Activated CD8-positive, alpha-beta T cell treated with anti-CD3 and anti-CD28 coated beads for 36 hours (primary cell): ENCODE measurements at regions of chr21 and their contacts with region 1.

Region 1: GRCh38 chr21:25561668-25562641 is 45.3 kb downstream of the MRPL39 start:
- DNase-seq: peak; percentile 90
- ATAC-seq: peak; percentile 70
- H3K4me3 Mint-ChIP-seq: peak overlapping the region; percentile 83
- H3K27ac Mint-ChIP-seq: peak overlapping the region; percentile 98
- H3K4me1 Mint-ChIP-seq: peaks cover 42% of the 10 kb centered on the region
- H3K27me3 Mint-ChIP-seq: no peaks in the 10 kb centered on the region
- CTCF ChIP-seq: no peak

Region 2: GRCh38 chr21:25457411-25457810 is 104.5 kb before region 1 on chr21:
- CTCF ChIA-PET with region 1: interaction called, 4 read pairs
- POLR2A ChIA-PET with region 1: interaction called, 117 read pairs
- intact Hi-C with region 1: loop called (anchors 2 kb)
- DNase-seq: no peak
- ATAC-seq: peak; percentile 47
- H3K4me3 Mint-ChIP-seq: peak overlapping the region; percentile 69
- H3K27ac Mint-ChIP-seq: peak overlapping the region; percentile 92
- H3K4me1 Mint-ChIP-seq: peaks cover 83% of the 10 kb centered on the region
- H3K27me3 Mint-ChIP-seq: no peaks in the 10 kb centered on the region
- CTCF ChIP-seq: no peak

Region 3: DNA sequence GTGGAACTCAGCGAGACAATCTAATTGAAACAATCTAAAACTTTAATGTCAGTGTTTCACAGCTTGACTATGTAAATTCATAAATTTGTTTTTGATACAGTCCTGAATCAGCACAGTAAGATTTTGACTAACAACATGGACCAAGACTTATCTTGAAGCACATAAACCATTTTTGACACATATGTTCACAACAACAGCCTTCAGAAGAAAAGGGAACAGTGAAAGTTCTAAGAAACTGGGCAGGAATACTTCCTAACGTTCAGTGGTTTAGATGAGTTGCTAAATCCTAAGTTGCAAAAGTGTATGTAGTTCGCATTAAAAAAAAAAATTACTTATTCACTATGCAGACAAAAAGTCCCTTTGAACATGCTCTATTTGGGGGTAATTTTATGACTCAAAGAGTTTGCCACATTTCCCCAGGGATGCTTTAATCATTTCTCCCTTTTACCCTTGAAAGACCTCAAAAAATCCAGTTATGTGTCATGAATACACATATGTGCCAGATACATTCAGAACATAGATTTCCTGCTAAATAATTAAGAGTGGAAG is 74.8 kb before region 1 on chr21:
- CTCF ChIA-PET with region 1: interaction called, 17 read pairs
- POLR2A ChIA-PET with region 1: interaction called, 107 read pairs
- intact Hi-C with region 1: loop called (anchors 1 kb)
- DNase-seq: no peak
- ATAC-seq: peak; percentile 75
- H3K4me3 Mint-ChIP-seq: peak overlapping the region; percentile 54
- H3K27ac Mint-ChIP-seq: peak overlapping the region; percentile 89
- H3K4me1 Mint-ChIP-seq: peaks cover 77% of the 10 kb centered on the region
- H3K27me3 Mint-ChIP-seq: no peaks in the 10 kb centered on the region
- CTCF ChIP-seq: no peak

Region 4: DNA sequence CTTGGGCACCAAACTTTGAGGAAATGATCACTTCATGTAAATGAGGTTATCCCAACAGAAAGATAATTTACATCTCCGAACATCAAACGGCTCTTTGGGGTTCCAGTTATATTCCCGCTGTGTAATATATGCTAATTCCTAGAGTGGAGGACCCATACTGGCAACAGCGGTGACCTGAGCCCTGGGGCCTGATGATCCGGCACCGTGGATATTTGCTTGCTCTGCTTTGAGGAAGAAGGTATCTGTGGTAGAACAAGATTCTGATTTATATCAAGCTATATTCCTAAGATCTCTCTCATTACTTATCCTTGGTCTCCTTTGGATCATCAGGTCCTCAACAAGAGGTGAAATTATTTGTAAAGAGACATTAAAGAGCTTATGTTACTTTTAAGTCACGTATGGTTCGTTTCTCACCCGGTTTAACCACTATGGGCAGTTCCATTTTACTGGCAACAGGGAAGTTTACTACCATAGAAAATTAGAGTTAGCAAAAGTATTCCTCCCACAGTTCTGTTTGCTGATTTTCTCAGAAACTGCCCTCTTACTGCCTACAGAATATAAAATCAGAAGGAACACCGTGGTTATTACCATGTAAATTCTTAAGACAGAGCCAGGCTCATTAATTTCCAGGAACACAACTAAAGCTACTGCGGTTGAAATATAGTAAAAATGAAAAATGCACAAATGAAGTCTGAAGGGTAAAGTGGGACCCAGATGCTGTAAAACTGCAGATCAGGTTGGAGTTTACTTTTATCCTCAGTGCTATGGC is 11.4 kb before region 1 on chr21:
- CTCF ChIA-PET with region 1: interaction called, 3 read pairs
- POLR2A ChIA-PET with region 1: interaction called, 18 read pairs
- intact Hi-C with region 1: no loop called
- DNase-seq: no peak
- ATAC-seq: peak; percentile 18
- H3K4me3 Mint-ChIP-seq: peak overlapping the region; percentile 65
- H3K27ac Mint-ChIP-seq: peak overlapping the region; percentile 66
- H3K4me1 Mint-ChIP-seq: peaks cover 34% of the 10 kb centered on the region
- H3K27me3 Mint-ChIP-seq: no peaks in the 10 kb centered on the region
- CTCF ChIP-seq: no peak